AG04449 (cell line): ENCODE measurements at regions of chrX and their contacts with region 1.

Region 1: DNA sequence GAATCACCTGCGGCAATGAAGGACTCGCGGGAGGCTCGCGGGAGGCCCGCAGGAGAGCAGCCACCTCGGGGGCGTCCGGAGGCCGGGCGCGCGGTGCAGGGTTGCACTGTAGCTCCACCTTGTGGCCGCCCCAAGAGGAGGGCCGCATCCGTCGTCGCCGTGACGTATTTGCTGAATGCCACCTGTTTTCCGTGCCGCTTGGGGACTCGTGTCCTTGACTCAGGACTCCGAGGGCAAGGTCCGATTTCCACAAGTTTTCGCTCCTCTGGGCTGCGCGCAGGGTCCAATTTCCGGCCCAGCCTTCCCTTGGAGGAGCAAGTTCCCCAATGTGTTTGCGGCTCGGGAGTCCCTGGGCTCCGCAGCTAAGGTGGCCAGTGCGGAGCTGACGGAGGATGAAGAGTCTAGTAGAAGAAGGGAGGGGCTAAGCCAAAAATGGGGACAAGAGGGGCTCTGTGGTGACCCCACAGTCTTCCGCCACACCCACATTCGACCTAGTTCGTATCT is 10.7 kb upstream of the DLG3 start:
- DNase-seq: no peak
- H3K4me3 ChIP-seq: peak overlapping the region; percentile 73
- CTCF ChIP-seq: peak; percentile 83

Region 2: DNA sequence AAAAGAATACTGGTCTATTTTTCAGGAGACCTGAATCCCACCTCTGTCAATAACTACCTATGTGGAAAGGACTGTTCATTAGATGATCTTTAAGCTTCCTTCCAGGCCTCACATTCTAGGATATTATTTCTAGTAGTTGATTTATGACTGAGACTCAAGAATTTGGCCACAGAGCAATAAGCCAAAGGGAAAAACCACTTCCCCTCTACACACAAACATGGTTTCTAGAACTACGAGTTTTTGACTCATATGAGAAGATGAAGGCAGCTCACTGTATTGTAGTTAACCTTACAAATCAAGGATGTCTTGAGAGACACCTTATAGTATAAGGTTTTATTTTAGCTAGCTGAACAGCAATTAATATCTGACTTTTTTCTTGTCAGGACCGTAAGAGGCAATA is 47.7 kb before region 1 on chrX:
- CTCF ChIA-PET with region 1: no interaction called
- POLR2A ChIA-PET with region 1: no interaction called
- DNase-seq: no peak
- H3K4me3 ChIP-seq: no peak overlapping the region
- CTCF ChIP-seq: no peak

Region 3: DNA sequence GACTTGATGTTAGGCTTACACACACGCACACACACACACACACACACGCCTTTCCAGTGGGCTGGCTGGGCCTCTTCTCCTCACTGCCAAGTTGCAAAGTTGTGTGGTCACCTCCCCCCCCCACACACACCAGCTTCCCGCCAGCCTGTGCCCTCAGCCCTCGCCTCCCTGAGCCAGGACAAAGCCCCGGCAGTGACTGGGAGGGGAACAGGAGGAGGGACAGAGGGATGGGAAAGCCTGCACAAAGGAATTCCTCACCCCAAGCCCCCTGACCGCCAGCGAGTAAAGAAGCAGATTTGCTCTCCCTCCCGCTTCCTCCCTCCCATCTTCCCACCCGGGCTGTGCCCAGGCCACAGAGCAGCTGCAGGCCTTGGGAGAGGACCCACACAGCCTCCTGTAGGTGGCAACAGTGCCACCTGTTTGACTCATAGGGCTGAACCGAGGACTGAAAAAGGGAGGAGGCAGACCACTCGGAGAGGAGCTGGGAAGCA is 11.0 kb before region 1 on chrX and contains the start of gene GDPD2:
- CTCF ChIA-PET with region 1: interaction called, 31 read pairs
- POLR2A ChIA-PET with region 1: interaction called, 3 read pairs
- DNase-seq: no peak
- H3K4me3 ChIP-seq: no peak within 1 kb of the TSS
- CTCF ChIP-seq: no peak

Region 4: DNA sequence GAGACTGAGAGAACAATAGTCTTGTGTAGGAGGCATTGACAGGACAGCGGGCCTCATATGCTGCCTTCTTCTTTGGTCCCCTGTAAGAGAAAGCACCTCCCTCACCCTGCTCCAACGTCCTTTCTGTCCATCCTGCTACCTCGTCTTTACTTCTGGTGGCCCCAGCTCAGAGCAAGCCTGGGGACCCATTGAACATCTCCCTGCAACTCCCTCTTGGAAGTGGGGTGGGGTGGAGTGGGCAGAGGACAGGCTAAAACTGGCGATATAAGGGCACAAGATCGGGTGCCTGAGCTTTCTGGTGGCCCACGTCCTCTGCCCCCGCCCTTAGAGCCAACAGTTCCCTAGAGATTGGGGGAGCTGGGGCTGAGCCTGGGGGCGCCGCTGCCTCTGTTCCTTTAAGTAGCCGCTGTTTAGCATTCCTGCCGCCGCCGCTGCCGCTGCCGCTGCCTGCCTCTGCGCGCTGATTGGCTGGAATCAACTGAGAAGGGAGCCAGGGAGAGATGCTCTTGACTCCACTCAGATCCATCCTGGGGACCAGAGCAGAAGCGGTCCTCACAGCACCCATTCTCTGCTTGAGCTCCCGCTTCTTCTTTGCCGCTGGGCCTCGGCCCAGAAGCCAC is 10.5 kb after region 1 on chrX and contains the start of gene DLG3:
- CTCF ChIA-PET with region 1: interaction called, 19 read pairs
- POLR2A ChIA-PET with region 1: no interaction called
- DNase-seq: no peak
- H3K4me3 ChIP-seq: peak within 1 kb of the TSS; percentile 39
- CTCF ChIP-seq: no peak